GM12878 (cell line): ENCODE measurements at regions of chr2 and their contacts with region 1.

Region 1: GRCh38 chr2:202588647-202589581 is 45.9 kb upstream of the FAM117B start:
- DNase-seq: peak; percentile 35
- ATAC-seq: peak; percentile 99
- H3K4me3 ChIP-seq: no peak overlapping the region
- H3K27ac ChIP-seq: no peak overlapping the region
- H3K4me1 ChIP-seq: peaks cover 3% of the 10 kb centered on the region
- H3K27me3 ChIP-seq: no peaks in the 10 kb centered on the region
- CTCF ChIP-seq: peak; percentile 90 to 92 (median 90)
- EP300 ChIP-seq: peak in 1 of 2 experiments; percentile 29; a peak in 1 of 4 replicates
- POLR2A ChIP-seq: no peak
- RAD21 ChIP-seq: peak; percentile 94

Region 2: GRCh38 chr2:201257956-201258665 is 1330.8 kb before region 1 on chr2:
- CTCF ChIA-PET with region 1: no interaction called
- POLR2A ChIA-PET with region 1: no interaction called
- RAD21 ChIA-PET with region 1: no interaction called
- SMC1A ChIA-PET with region 1: no interaction called
- in situ Hi-C with region 1: no loop called
- intact Hi-C with region 1: no loop called
- DNase-seq: peak; percentile 79
- ATAC-seq: peak; percentile 79
- H3K4me3 ChIP-seq: peak overlapping the region; percentile 62
- H3K27ac ChIP-seq: peak overlapping the region; percentile 99
- H3K4me1 ChIP-seq: peaks cover 29% of the 10 kb centered on the region
- H3K27me3 ChIP-seq: no peaks in the 10 kb centered on the region
- CTCF ChIP-seq: 0 out of 6 replicates have a peak, but pooled peaks of 1 of the 3 experiments have one; percentile 16
- EP300 ChIP-seq: peak; percentile 64 to 97
- POLR2A ChIP-seq: peak; percentile 61
- RAD21 ChIP-seq: peak; percentile 53

Region 3: GRCh38 chr2:202609381-202610145 is 20.6 kb after region 1 on chr2:
- CTCF ChIA-PET with region 1: interaction called, 21 read pairs
- POLR2A ChIA-PET with region 1: no interaction called
- RAD21 ChIA-PET with region 1: interaction called, 6 read pairs
- SMC1A ChIA-PET with region 1: interaction called, 21 read pairs
- in situ Hi-C with region 1: no loop called
- intact Hi-C with region 1: no loop called
- DNase-seq: peak; percentile 90
- ATAC-seq: peak; percentile 91
- H3K4me3 ChIP-seq: no peak overlapping the region
- H3K27ac ChIP-seq: peak overlapping the region; percentile 64
- H3K4me1 ChIP-seq: peaks cover 34% of the 10 kb centered on the region
- H3K27me3 ChIP-seq: no peaks in the 10 kb centered on the region
- CTCF ChIP-seq: no peak
- EP300 ChIP-seq: no peak; a peak in 1 of 4 replicates
- POLR2A ChIP-seq: no peak
- RAD21 ChIP-seq: no peak

Region 4: GRCh38 chr2:202671317-202672035 is 82.6 kb after region 1 on chr2:
- CTCF ChIA-PET with region 1: interaction called, 10 read pairs
- POLR2A ChIA-PET with region 1: no interaction called
- RAD21 ChIA-PET with region 1: interaction called, 10 read pairs
- SMC1A ChIA-PET with region 1: interaction called, 12 read pairs
- in situ Hi-C with region 1: no loop called
- intact Hi-C with region 1: no loop called
- DNase-seq: no peak
- ATAC-seq: no peak
- H3K4me3 ChIP-seq: no peak overlapping the region
- H3K27ac ChIP-seq: no peak overlapping the region
- H3K4me1 ChIP-seq: peaks cover 17% of the 10 kb centered on the region
- H3K27me3 ChIP-seq: no peaks in the 10 kb centered on the region
- CTCF ChIP-seq: no peak
- EP300 ChIP-seq: no peak
- POLR2A ChIP-seq: no peak
- RAD21 ChIP-seq: no peak

Region 5: GRCh38 chr2:202780514-202781021 is 191.7 kb after region 1 on chr2:
- CTCF ChIA-PET with region 1: interaction called, 6 read pairs
- POLR2A ChIA-PET with region 1: no interaction called
- RAD21 ChIA-PET with region 1: interaction called, 4 read pairs
- SMC1A ChIA-PET with region 1: interaction called, 5 read pairs
- in situ Hi-C with region 1: no loop called
- intact Hi-C with region 1: loop called (anchors 5 kb)
- DNase-seq: peak; percentile 39
- ATAC-seq: peak; percentile 98
- H3K4me3 ChIP-seq: no peak overlapping the region
- H3K27ac ChIP-seq: no peak overlapping the region
- H3K4me1 ChIP-seq: peaks cover 3% of the 10 kb centered on the region; the same call in 1 of the 2 replicates
- H3K27me3 ChIP-seq: no peaks in the 10 kb centered on the region
- CTCF ChIP-seq: no peak
- EP300 ChIP-seq: peak; percentile 43 to 60; a peak in 2 of 4 replicates
- POLR2A ChIP-seq: no peak
- RAD21 ChIP-seq: no peak

Region 6: DNA sequence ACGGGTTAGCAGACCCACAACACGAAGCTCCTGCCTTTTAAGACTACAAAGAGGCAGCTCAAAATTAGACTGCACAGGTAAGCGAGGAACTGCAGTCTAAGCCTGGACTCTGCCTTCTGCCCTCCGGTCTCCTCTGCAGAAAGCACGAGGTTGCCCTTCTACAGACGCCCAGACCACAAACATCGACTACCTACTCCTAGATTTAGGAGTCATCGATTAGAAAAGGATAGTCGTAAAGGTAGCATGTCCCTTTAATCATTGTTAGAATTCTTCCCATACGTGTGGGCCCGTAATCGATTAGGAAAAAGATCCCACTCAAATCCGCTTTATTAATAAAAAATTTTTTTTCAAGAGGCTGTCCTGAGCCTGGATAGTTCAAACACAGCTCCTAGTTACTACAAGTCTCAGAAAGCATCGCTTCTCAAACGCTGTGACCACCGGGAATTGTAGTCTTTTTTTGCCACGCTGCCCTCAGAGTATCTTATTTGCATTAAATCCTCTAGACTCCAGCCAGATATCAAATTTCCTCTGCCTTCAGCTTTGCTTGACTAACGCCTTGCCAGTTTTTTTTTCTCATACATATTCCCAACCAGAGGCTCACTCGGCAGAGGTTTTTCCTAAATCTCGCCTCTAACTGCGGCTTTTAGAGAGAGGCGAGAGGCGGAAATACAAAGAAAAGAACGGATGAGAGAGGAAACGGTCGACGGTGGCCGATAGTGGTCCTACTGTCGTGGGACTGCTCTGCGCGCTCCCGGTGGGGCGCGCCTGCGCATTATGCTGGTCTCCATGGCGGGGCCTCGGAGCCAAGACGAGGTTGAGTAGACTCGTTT is 322.8 kb after region 1 on chr2 and contains the starts of genes CARF and WDR12:
- CTCF ChIA-PET with region 1: interaction called, 5 read pairs
- POLR2A ChIA-PET with region 1: no interaction called
- RAD21 ChIA-PET with region 1: no interaction called
- SMC1A ChIA-PET with region 1: interaction called, 10 read pairs
- in situ Hi-C with region 1: no loop called
- intact Hi-C with region 1: no loop called
- DNase-seq: peak; percentile 82
- ATAC-seq: peak; percentile 88
- H3K4me3 ChIP-seq: peak within 1 kb of the TSS; percentile 95
- H3K27ac ChIP-seq: peak within 1 kb of the TSS; percentile 93
- H3K4me1 ChIP-seq: peaks cover 5% of the 10 kb centered on the region
- H3K27me3 ChIP-seq: no peaks in the 10 kb centered on the region
- CTCF ChIP-seq: no peak
- EP300 ChIP-seq: no peak
- POLR2A ChIP-seq: peak; percentile 80
- RAD21 ChIP-seq: no peak
- polyA plus RNA-seq, gene CARF: 1.8 to 2.8 TPM
- polyA plus RNA-seq, gene WDR12: 214 to 256 TPM

Region 7: GRCh38 chr2:203814661-203815540 is 1226.0 kb after region 1 on chr2:
- CTCF ChIA-PET with region 1: no interaction called
- POLR2A ChIA-PET with region 1: no interaction called
- RAD21 ChIA-PET with region 1: no interaction called
- SMC1A ChIA-PET with region 1: interaction called, 3 read pairs
- in situ Hi-C with region 1: loop called (anchors 25 kb)
- intact Hi-C with region 1: no loop called
- DNase-seq: no peak
- ATAC-seq: peak; percentile 91
- H3K4me3 ChIP-seq: no peak overlapping the region
- H3K27ac ChIP-seq: no peak overlapping the region
- H3K4me1 ChIP-seq: peaks cover 6% of the 10 kb centered on the region
- H3K27me3 ChIP-seq: peaks cover 0 to under 1% of the 10 kb centered on the region in 2 experiments; a peak in 1 of 4 replicates
- CTCF ChIP-seq: peak; percentile 55 to 80 (median 66); a peak in 5 of 6 replicates
- EP300 ChIP-seq: no peak
- POLR2A ChIP-seq: no peak
- RAD21 ChIP-seq: peak; percentile 89